HepG2 (cell line): ENCODE measurements at regions of chrX and their contacts with region 1.

Region 1: GRCh38 chrX:39953883-39954282 is 143.9 kb downstream of the BCOR start:
- DNase-seq: peak; percentile 88
- ATAC-seq: peak; percentile 99
- H3K4me3 ChIP-seq: peak overlapping the region in 1 of 3 experiments; percentile 16; a peak in 1 of 6 replicates
- H3K27ac ChIP-seq: peak overlapping the region; percentile 49
- H3K4me1 ChIP-seq: peaks cover 66% of the 10 kb centered on the region
- H3K27me3 ChIP-seq: no peaks in the 10 kb centered on the region
- CTCF ChIP-seq: no peak; the same call in 1 of the 2 replicates
- EP300 ChIP-seq: peak; percentile 53; a peak in 2 of 4 replicates
- POLR2A ChIP-seq: no peak
- RAD21 ChIP-seq: no peak

Region 2: GRCh38 chrX:39896951-39897740 is 56.7 kb before region 1 on chrX:
- CTCF ChIA-PET with region 1: no interaction called
- POLR2A ChIA-PET with region 1: no interaction called
- in situ Hi-C with region 1: loop called (anchors 10 kb)
- intact Hi-C with region 1: no loop called
- DNase-seq: peak; percentile 24
- ATAC-seq: peak; percentile 79
- H3K4me3 ChIP-seq: no peak overlapping the region
- H3K27ac ChIP-seq: no peak overlapping the region
- H3K4me1 ChIP-seq: 0 out of 2 replicates have a peak, but pooled peaks cover 9% of the 10 kb centered on the region
- H3K27me3 ChIP-seq: peaks cover 1 to 6% of the 10 kb centered on the region in 2 experiments; a peak in 2 of 5 replicates
- CTCF ChIP-seq: peak; percentile 36
- EP300 ChIP-seq: no peak
- POLR2A ChIP-seq: no peak
- RAD21 ChIP-seq: no peak

Region 3: DNA sequence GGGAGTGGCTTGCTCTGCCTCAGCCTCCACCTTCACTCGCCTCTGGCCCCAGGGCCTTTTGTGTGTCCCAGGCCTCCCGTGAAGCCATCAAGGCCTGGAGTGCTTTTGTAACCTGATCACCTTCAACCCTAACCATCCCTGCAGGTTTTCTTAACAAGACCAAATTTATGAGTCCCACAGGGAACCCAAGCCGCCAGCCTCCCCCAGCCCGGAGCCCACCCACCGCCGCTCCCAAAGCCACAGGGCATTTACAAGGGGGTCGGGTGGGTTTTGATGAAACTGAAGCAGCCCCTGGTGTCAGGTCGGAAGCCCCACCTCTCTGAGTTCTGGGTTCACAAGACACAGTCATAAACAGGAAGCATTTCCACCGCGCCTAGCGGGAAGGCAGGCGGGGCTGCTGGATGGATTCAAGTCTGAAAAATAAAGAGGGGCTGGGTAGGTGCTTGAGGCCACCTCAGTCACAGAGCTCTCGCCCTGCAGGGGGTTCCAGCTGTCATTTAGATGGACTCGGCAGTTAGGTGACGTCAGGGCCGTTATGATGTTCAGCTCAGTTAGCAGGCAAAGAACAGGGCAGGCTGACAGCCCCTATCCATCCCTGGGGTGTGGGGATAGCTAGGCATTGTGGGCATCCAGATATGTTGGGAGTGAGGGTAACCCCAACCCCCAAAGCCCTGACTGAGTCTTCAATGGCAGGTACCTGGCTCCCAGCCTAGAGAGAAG is 15.4 kb after region 1 on chrX:
- CTCF ChIA-PET with region 1: no interaction called
- POLR2A ChIA-PET with region 1: no interaction called
- in situ Hi-C with region 1: no loop called
- intact Hi-C with region 1: no loop called
- DNase-seq: no peak
- ATAC-seq: peak; percentile 35; the same call in 1 of the 3 replicates
- H3K4me3 ChIP-seq: no peak overlapping the region
- H3K27ac ChIP-seq: no peak overlapping the region
- H3K4me1 ChIP-seq: peaks cover 41% of the 10 kb centered on the region
- H3K27me3 ChIP-seq: no peaks in the 10 kb centered on the region
- CTCF ChIP-seq: no peak
- EP300 ChIP-seq: no peak
- POLR2A ChIP-seq: no peak
- RAD21 ChIP-seq: no peak